ENCODE measurements at regions of chr6 and their contacts with region 1.

Region 1: GRCh38 chr6:36979347-36979742 is 6.7 kb downstream of the MTCH1 start:
- DNase-seq: peak; percentile 21
- H3K4me3 Mint-ChIP-seq: no peak overlapping the region
- H3K27ac Mint-ChIP-seq: peak overlapping the region; percentile 54
- H3K4me1 Mint-ChIP-seq: peaks cover 32% of the 10 kb centered on the region
- H3K27me3 Mint-ChIP-seq: no peaks in the 10 kb centered on the region

Region 2: GRCh38 chr6:36885461-36886401 is 93.6 kb before region 1 on chr6 and contains the start of gene C6orf89:
- intact Hi-C with region 1: loop called (anchors 1 kb)
- DNase-seq: peak; percentile 94
- H3K4me3 Mint-ChIP-seq: peak within 1 kb of the TSS; percentile 91
- H3K27ac Mint-ChIP-seq: peak within 1 kb of the TSS; percentile 82
- H3K4me1 Mint-ChIP-seq: peaks cover 37% of the 10 kb centered on the region
- H3K27me3 Mint-ChIP-seq: no peaks in the 10 kb centered on the region
- total RNA-seq, gene C6orf89: 31.5 and 31.8 TPM in 2 replicates

Region 3: DNA sequence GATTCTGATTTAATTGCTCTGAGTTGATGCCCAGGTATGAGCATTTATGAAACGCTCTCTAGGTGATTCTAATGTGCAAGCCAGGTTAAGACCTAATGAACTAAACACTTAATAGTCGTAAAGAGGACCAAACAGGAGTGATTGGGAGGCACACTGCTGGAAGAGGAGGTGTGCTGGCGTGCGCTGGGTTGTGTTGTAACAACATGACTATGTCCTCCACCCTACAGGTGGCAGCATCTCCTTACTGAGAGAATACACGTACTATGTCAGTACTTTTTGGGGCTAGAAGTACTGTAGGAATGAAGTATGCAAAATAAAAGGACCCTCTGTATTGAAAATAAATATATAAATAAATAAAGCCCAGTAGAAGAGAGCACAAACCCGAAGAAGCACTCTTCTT is 81.7 kb before region 1 on chr6:
- intact Hi-C with region 1: loop called (anchors 1 kb)
- DNase-seq: no peak
- H3K4me3 Mint-ChIP-seq: no peak overlapping the region
- H3K27ac Mint-ChIP-seq: no peak overlapping the region
- H3K4me1 Mint-ChIP-seq: peaks cover 7% of the 10 kb centered on the region
- H3K27me3 Mint-ChIP-seq: no peaks in the 10 kb centered on the region

Measured in activated T-helper 1 cell treated with anti-CD3 and anti-CD28 coated beads, Interleukin-12 subunit alpha, Interleukin-12 subunit beta, Interleukin-2, Interleukin-4 antibody, amounts not matched to agents 30 ng/mL and 10 ng/mL and 1 ng/mL, durations not matched to agents 14 hours and 24 hours and 36 hours (primary cell).